Natural killer cell (primary cell): ENCODE measurements at regions of chr9 and their contacts with region 1.

Region 1: GRCh38 chr9:92669890-92670708 is at the start of gene IPPK:
- DNase-seq: peak; percentile 95 to 98
- ATAC-seq: peak; percentile 92 to 98 (median 93)
- H3K4me3 ChIP-seq: peak within 1 kb of the TSS; percentile 85
- H3K4me3 Mint-ChIP-seq: peak within 1 kb of the TSS; percentile 90
- H3K27ac ChIP-seq: peak within 1 kb of the TSS; percentile 96
- H3K27ac Mint-ChIP-seq: peak within 1 kb of the TSS; percentile 93 to 94
- H3K4me1 ChIP-seq: peaks cover 23% of the 10 kb centered on the region
- H3K4me1 Mint-ChIP-seq: peaks cover 20 to 27% of the 10 kb centered on the region in 2 donors
- H3K27me3 ChIP-seq: no peaks in the 10 kb centered on the region
- H3K27me3 Mint-ChIP-seq: no peaks in the 10 kb centered on the region
- CTCF ChIP-seq: no peak
- total RNA-seq, gene IPPK: 4.9 to 9.2 (median 6.7) TPM

Region 2: DNA sequence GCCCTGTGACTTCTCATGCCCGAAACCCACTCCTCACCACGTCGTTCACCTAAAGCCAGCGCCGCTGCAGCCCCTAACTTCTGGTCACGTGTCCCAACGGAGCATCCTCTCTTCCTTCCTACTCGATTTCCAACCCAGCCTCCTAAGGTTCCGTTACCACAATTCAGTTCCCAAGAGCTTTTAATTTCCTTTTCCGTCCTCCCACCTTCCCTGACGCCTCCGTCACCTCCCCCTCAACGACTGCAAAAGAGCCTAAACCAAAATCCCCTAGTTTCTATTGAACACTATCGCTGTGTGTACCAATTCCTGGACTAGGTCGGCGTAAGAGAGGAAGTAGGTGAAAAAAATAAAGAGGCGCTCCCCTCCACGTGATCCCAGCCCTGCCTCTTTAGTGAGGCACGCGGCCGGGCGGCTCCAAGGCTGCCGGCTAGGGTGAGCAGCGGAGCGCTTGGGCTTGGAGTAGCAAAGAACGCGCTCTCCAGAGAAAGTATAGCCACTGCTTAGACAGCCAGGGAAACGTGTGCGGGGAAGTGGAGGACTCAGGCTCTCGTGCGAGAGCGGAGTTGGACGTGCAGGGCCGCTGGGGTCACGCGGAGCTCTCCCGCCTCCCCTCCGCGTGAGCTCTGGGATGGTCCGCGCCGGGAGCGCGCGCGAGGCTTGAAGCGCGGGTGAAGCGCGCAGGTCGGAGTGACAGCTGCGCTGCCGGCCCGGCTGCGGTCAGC is 344.7 kb before region 1 on chr9 and contains the starts of genes CENPP and NOL8:
- intact Hi-C with region 1: loop called (anchors 2 kb)
- DNase-seq: peak; percentile 82 to 91
- ATAC-seq: peak; percentile 91 to 96 (median 91)
- H3K4me3 ChIP-seq: peak within 1 kb of the TSS; percentile 65
- H3K4me3 Mint-ChIP-seq: peak within 1 kb of the TSS; percentile 99
- H3K27ac ChIP-seq: peak within 1 kb of the TSS; percentile 95
- H3K27ac Mint-ChIP-seq: peak within 1 kb of the TSS; percentile 98
- H3K4me1 ChIP-seq: peaks cover 4% of the 10 kb centered on the region
- H3K4me1 Mint-ChIP-seq: peaks cover 31 to 33% of the 10 kb centered on the region in 2 donors
- H3K27me3 ChIP-seq: no peaks in the 10 kb centered on the region
- H3K27me3 Mint-ChIP-seq: no peaks in the 10 kb centered on the region
- CTCF ChIP-seq: no peak
- total RNA-seq, gene CENPP: 10.3 to 14.5 (median 12.1) TPM
- total RNA-seq, gene NOL8: 42.3 to 50.7 (median 46.7) TPM

Region 3: DNA sequence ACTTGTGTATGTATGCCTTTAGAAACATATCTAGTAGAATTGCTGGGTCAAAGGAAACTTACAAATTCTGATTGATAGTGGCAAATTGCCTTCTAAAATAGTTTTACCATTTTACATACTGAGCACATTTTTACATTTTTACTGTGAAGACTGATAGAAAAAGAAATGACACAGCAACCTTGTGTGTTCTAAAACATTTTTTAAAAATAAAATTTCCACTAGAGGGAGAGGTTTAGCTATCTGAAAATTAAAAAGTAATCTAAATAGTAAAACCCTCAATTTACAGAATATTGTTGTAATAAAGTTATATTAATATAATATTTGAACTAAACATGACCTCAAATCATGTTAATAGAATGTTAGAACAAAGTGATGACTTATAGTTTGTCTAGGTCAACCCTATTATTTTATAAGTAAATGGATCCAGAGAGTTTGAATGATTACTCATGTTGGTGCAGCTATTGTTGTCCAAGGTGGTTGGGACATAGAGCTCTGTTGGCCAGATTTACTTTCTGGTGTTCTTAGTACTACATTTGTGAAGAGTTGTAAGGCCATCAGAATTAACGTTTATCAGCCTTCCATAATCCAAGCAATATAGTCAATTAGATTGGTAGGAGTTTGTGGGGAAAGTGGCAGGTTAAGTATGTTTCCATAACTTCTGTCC is 327.1 kb before region 1 on chr9:
- intact Hi-C with region 1: no loop called
- DNase-seq: no peak
- ATAC-seq: no peak
- H3K4me3 ChIP-seq: no peak overlapping the region
- H3K4me3 Mint-ChIP-seq: no peak overlapping the region
- H3K27ac ChIP-seq: no peak overlapping the region
- H3K27ac Mint-ChIP-seq: no peak overlapping the region
- H3K4me1 ChIP-seq: no peaks in the 10 kb centered on the region
- H3K4me1 Mint-ChIP-seq: no peaks in the 10 kb centered on the region
- H3K27me3 ChIP-seq: no peaks in the 10 kb centered on the region
- H3K27me3 Mint-ChIP-seq: no peaks in the 10 kb centered on the region
- CTCF ChIP-seq: no peak

Region 4: DNA sequence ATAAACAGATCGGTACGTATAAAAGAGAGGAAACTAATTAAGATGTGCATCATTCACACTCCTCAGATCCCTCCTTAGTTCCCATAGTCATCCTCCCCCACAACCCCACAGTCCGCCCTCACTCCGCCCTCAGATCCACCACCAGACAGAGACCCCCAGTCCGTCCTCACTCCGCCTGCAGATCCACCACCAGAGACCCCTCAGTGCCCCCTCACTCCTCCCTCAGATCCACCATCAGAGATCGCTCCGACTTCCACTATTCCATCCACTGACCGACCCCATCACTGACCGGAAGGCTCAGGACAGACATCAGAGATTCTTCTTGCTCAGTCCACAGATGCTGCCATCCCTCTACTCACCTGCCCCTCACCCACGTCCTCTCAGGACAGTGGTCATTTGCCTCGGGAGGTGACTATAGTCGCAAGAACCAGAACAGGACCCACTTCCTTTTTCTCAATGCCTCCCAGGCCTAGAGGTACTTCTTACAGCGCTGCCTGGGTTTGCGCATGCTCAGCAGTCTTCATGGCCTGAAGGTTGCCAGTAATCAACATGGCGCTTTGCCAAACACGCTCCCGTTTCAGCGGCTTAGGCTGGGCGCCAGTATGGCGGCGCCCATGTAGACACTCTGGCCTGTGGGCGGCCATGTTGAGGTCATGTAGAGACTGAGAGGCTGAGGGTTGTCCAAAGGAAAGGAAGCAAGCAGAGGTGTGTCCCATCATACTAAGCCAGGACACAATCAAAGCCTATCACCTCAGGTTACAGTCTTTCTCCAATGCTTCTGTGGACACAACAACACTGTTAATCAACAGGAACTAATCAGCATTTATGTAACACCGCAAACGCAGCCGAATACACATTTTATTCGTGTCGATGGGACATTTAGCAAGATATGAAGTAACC is 207.7 kb after region 1 on chr9 and contains the start of gene ZNF484:
- intact Hi-C with region 1: loop called (anchors 1 kb)
- DNase-seq: peak; percentile 92 to 100
- ATAC-seq: peak; percentile 97 to 100 (median 99)
- H3K4me3 ChIP-seq: peak within 1 kb of the TSS; percentile 71
- H3K4me3 Mint-ChIP-seq: peak within 1 kb of the TSS; percentile 99
- H3K27ac ChIP-seq: peak within 1 kb of the TSS; percentile 87
- H3K27ac Mint-ChIP-seq: peak within 1 kb of the TSS; percentile 97 to 100
- H3K4me1 ChIP-seq: peaks cover 7% of the 10 kb centered on the region
- H3K4me1 Mint-ChIP-seq: peaks cover 30 to 49% of the 10 kb centered on the region in 2 donors
- H3K27me3 ChIP-seq: no peaks in the 10 kb centered on the region
- H3K27me3 Mint-ChIP-seq: no peaks in the 10 kb centered on the region
- CTCF ChIP-seq: no peak
- total RNA-seq, gene ZNF484: 14.1 to 19.5 (median 16.2) TPM